ENCODE measurements at regions of chr9 and their contacts with region 1.

Region 1: DNA sequence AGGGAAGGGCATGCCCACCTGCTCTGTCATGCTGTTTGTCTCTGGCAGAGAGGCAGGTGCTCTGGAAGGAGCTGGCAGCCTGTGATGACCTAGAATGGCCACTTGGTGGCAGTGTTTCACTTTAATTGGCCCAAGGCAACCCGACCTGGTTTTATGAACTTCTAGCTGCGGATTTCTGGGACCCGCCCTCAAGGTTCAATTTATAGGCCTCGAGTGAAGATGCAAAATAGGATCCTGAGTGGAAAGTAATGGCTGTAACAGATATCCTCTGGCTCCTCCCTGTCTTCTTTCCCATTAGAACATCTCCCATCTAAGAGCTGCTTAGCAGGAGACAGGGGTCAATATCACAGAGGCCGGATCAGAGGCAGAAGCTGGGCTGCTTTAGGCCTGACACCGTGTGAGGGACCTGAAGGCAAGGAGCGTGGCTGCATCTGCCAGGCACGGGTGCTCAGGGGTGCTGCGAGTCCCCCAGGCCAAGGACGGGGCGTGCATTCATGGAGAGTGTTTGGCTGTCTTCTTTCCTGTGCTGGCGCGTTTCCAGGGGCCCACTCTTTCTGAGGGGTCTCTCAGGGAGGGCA is 56.7 kb upstream of the SLC28A3 start:
- DNase-seq: peak; percentile 49 to 61 (median 53)
- H3K4me3 ChIP-seq: no peak overlapping the region
- H3K4me3 Mint-ChIP-seq: no peak overlapping the region
- H3K27ac ChIP-seq: no peak overlapping the region
- H3K27ac Mint-ChIP-seq: peak overlapping the region in 1 of 7 donors; percentile 8
- H3K4me1 ChIP-seq: no peaks in the 10 kb centered on the region
- H3K4me1 Mint-ChIP-seq: no peaks in the 10 kb centered on the region
- H3K27me3 ChIP-seq: no peaks in the 10 kb centered on the region
- H3K27me3 Mint-ChIP-seq: peaks cover 0 to 4% of the 10 kb centered on the region in 2 donors

Region 2: GRCh38 chr9:84061594-84062193 is 335.5 kb before region 1 on chr9:
- CTCF ChIA-PET with region 1: no interaction called
- POLR2A ChIA-PET with region 1: no interaction called
- intact Hi-C with region 1: no loop called
- DNase-seq: no peak
- H3K4me3 ChIP-seq: no peak overlapping the region
- H3K4me3 Mint-ChIP-seq: no peak overlapping the region
- H3K27ac ChIP-seq: no peak overlapping the region
- H3K27ac Mint-ChIP-seq: no peak overlapping the region
- H3K4me1 ChIP-seq: no peaks in the 10 kb centered on the region
- H3K4me1 Mint-ChIP-seq: no peaks in the 10 kb centered on the region
- H3K27me3 ChIP-seq: no peaks in the 10 kb centered on the region
- H3K27me3 Mint-ChIP-seq: peaks cover 7 to 10% of the 10 kb centered on the region in 2 donors

Region 3: GRCh38 chr9:84357275-84357674 is 40.0 kb before region 1 on chr9:
- CTCF ChIA-PET with region 1: no interaction called
- POLR2A ChIA-PET with region 1: no interaction called
- intact Hi-C with region 1: no loop called
- DNase-seq: no peak
- H3K4me3 ChIP-seq: no peak overlapping the region
- H3K4me3 Mint-ChIP-seq: no peak overlapping the region
- H3K27ac ChIP-seq: no peak overlapping the region
- H3K27ac Mint-ChIP-seq: no peak overlapping the region
- H3K4me1 ChIP-seq: no peaks in the 10 kb centered on the region
- H3K4me1 Mint-ChIP-seq: no peaks in the 10 kb centered on the region
- H3K27me3 ChIP-seq: no peaks in the 10 kb centered on the region
- H3K27me3 Mint-ChIP-seq: peaks cover 0 to 2% of the 10 kb centered on the region in 2 donors

Region 4: GRCh38 chr9:84411683-84412267 is 14.5 kb after region 1 on chr9:
- CTCF ChIA-PET with region 1: interaction called, 11 read pairs
- POLR2A ChIA-PET with region 1: no interaction called
- intact Hi-C with region 1: no loop called
- DNase-seq: no peak
- H3K4me3 ChIP-seq: no peak overlapping the region
- H3K4me3 Mint-ChIP-seq: no peak overlapping the region
- H3K27ac ChIP-seq: no peak overlapping the region
- H3K27ac Mint-ChIP-seq: peak overlapping the region in 1 of 7 donors; percentile 38
- H3K4me1 ChIP-seq: no peaks in the 10 kb centered on the region
- H3K4me1 Mint-ChIP-seq: no peaks in the 10 kb centered on the region
- H3K27me3 ChIP-seq: no peaks in the 10 kb centered on the region
- H3K27me3 Mint-ChIP-seq: peaks cover 0 to 3% of the 10 kb centered on the region in 2 donors

Region 5: DNA sequence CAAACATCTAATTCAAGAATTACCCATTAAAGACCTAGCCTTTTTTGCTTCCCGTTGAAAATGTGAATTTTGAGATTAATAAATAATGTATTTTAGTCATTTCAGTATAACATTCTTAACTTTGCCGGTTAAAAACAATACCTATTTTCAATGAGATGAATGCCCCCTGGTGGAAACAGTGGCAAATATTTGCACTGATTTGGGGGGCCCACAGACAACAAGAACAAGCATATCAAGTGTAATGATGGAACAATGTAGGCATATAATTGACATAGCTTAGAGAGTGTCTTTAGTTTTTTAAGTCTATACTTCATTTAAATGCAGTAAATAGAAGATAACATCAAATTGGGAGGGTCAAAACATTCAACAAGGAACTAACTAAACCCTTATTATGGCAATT is 384.2 kb after region 1 on chr9:
- CTCF ChIA-PET with region 1: interaction called, 11 read pairs
- POLR2A ChIA-PET with region 1: no interaction called
- intact Hi-C with region 1: no loop called
- DNase-seq: peak in 2 of 5 donors; percentile 4 to 5
- H3K4me3 ChIP-seq: no peak overlapping the region
- H3K4me3 Mint-ChIP-seq: no peak overlapping the region
- H3K27ac ChIP-seq: no peak overlapping the region
- H3K27ac Mint-ChIP-seq: no peak overlapping the region
- H3K4me1 ChIP-seq: no peaks in the 10 kb centered on the region
- H3K4me1 Mint-ChIP-seq: no peaks in the 10 kb centered on the region
- H3K27me3 ChIP-seq: no peaks in the 10 kb centered on the region
- H3K27me3 Mint-ChIP-seq: peaks cover 0 to 8% of the 10 kb centered on the region in 2 donors

Region 6: DNA sequence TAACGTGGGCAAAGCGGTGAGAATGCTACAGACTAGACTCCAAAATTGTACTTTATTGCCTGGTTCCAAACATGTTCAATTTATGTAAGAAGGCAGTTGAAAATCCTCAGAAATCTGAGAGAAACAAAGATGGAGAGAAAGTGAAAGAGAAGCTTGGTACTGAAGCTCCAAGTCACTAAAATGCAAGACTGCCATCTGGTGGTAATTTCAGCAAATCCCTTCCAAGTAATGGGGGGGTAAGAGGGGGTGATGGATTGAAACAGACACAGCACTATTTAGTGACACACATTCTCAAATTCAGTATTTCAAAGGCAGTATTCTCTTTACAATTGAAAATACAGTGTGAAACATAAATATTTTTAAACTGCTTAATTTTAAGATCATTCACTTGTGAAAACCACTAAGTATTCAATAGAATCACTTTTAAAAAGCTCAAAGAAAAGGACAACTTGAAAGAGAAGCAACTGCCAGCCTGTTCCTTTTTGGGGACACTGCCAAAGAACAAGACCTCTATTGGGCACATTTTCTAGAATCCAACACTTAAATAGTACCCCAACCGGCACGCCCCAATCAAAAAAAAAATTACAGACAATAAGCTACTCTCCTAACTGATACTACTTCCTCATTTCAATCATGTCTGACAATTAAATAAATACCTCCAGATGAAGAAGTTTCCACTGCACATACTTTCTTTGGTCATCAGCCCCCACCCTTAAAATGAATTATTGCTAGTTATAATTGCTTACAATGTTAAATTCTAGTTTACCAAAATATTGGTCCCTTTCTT is 1213.0 kb after region 1 on chr9:
- CTCF ChIA-PET with region 1: interaction called, 56 read pairs
- POLR2A ChIA-PET with region 1: no interaction called
- intact Hi-C with region 1: loop called (anchors 1 kb)
- DNase-seq: peak; percentile 50 to 67 (median 61)
- H3K4me3 ChIP-seq: no peak overlapping the region
- H3K4me3 Mint-ChIP-seq: peak overlapping the region in 5 of 8 donors; percentile 7 to 79 (median 55)
- H3K27ac ChIP-seq: no peak overlapping the region
- H3K27ac Mint-ChIP-seq: peak overlapping the region; percentile 2 to 91 (median 70)
- H3K4me1 ChIP-seq: peaks cover 7% of the 10 kb centered on the region
- H3K4me1 Mint-ChIP-seq: peaks cover 5 to 9% (median 7%) of the 10 kb centered on the region in 4 donors
- H3K27me3 ChIP-seq: no peaks in the 10 kb centered on the region
- H3K27me3 Mint-ChIP-seq: no peaks in the 10 kb centered on the region

Region 7: DNA sequence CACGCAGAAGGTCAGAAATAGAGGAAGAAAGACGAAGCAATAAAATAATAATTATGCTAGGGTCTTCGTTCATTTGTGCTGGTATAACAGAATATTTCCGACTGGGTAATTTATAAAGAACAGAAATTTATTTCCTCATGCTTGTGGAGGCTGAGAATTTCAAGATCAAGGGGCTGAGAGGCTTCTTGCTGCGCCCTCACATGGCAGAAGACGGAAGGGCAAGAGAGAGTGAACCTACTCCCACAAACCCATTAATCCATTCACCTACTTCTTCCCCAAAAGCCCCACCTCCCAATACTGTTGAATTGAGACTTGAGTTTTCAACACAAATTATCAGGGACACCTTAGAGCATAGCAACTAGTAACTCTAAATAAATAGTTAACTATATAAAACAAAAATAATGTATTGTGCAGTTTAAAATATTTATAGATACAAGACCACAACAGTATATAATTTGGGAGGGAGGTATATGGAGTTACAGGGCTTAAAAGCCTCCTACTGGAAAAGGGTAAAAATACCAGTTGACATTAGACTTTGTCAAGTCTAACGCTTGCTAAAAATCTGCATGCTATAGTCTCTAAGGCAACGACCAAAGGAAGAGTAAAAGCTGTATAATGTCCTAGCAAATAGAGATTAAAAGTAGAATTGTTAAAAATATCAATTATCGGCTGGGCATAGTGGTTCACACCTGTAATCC is 1503.4 kb after region 1 on chr9:
- CTCF ChIA-PET with region 1: no interaction called
- POLR2A ChIA-PET with region 1: no interaction called
- intact Hi-C with region 1: loop called (anchors 10 kb)
- DNase-seq: peak in 4 of 5 donors; percentile 1 to 19 (median 14)
- H3K4me3 ChIP-seq: no peak overlapping the region
- H3K4me3 Mint-ChIP-seq: no peak overlapping the region
- H3K27ac ChIP-seq: no peak overlapping the region
- H3K27ac Mint-ChIP-seq: no peak overlapping the region
- H3K4me1 ChIP-seq: no peaks in the 10 kb centered on the region
- H3K4me1 Mint-ChIP-seq: peaks cover 0 to 3% (median under 1%) of the 10 kb centered on the region in 4 donors
- H3K27me3 ChIP-seq: no peaks in the 10 kb centered on the region
- H3K27me3 Mint-ChIP-seq: peaks cover 0 to 2% of the 10 kb centered on the region in 2 donors

Measured in CD4-positive, alpha-beta memory T cell (primary cell).